ENCODE measurements at regions of chr17 and their contacts with region 1.

Region 1: GRCh38 chr17:75059369-75060345 is 12.6 kb downstream of the KCTD2 start:
- DNase-seq: no peak
- ATAC-seq: no peak
- H3K4me3 ChIP-seq: no peak overlapping the region
- H3K4me3 Mint-ChIP-seq: no peak overlapping the region
- H3K27ac ChIP-seq: no peak overlapping the region
- H3K27ac Mint-ChIP-seq: no peak overlapping the region
- H3K4me1 ChIP-seq: no peaks in the 10 kb centered on the region
- H3K4me1 Mint-ChIP-seq: no peaks in the 10 kb centered on the region
- H3K27me3 ChIP-seq: no peaks in the 10 kb centered on the region
- H3K27me3 Mint-ChIP-seq: no peaks in the 10 kb centered on the region
- CTCF ChIP-seq: no peak

Region 2: GRCh38 chr17:75069783-75070182 is 10.1 kb after region 1 on chr17:
- CTCF ChIA-PET with region 1: interaction called, 10 read pairs
- POLR2A ChIA-PET with region 1: interaction called, 5 read pairs
- intact Hi-C with region 1: no loop called
- DNase-seq: no peak
- ATAC-seq: no peak
- H3K4me3 ChIP-seq: no peak overlapping the region
- H3K4me3 Mint-ChIP-seq: no peak overlapping the region
- H3K27ac ChIP-seq: no peak overlapping the region
- H3K27ac Mint-ChIP-seq: no peak overlapping the region
- H3K4me1 ChIP-seq: no peaks in the 10 kb centered on the region
- H3K4me1 Mint-ChIP-seq: no peaks in the 10 kb centered on the region
- H3K27me3 ChIP-seq: no peaks in the 10 kb centered on the region
- H3K27me3 Mint-ChIP-seq: no peaks in the 10 kb centered on the region
- CTCF ChIP-seq: no peak

Region 3: DNA sequence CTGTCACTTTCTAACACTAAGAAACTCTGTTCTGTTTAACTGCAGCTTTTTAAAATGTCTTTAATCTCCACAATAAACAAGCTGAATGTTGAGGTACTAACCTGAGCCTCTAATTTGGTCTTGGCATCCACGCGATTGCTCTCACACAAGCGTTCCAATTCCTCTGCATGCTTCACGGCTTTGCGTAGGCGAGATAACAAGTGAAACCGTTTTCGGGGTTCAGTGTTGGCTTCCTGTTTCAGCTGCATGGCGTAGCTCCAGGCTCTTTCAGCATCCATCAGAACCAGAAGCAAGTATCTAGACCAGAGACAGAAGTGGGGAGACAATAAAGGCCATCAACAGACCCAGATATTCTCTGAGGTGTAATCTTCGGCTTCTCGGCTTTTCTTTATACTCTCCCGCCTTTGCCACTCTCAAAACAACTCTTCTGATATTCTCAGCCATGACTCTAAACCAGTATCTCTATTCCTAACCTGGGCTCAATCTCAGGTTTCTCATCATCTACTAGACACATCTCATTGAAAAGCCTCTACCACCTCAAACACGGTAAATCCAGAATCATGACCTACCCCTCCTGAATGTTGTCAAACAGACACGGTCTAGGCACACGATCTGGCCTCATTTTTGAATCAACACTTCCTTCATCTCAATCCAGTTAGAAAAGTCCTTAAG is 1004.4 kb after region 1 on chr17:
- CTCF ChIA-PET with region 1: no interaction called
- POLR2A ChIA-PET with region 1: interaction called, 10 read pairs
- intact Hi-C with region 1: no loop called
- DNase-seq: peak; percentile 35
- ATAC-seq: no peak
- H3K4me3 ChIP-seq: no peak overlapping the region
- H3K4me3 Mint-ChIP-seq: no peak overlapping the region
- H3K27ac ChIP-seq: peak overlapping the region in 1 of 2 donors; percentile 49
- H3K27ac Mint-ChIP-seq: peak overlapping the region; percentile 73
- H3K4me1 ChIP-seq: no peaks in the 10 kb centered on the region
- H3K4me1 Mint-ChIP-seq: peaks cover 11% of the 10 kb centered on the region
- H3K27me3 ChIP-seq: no peaks in the 10 kb centered on the region
- H3K27me3 Mint-ChIP-seq: no peaks in the 10 kb centered on the region
- CTCF ChIP-seq: no peak

Measured in B cell (primary cell).